ENCODE measurements at regions of chr7 and their contacts with region 1.

Region 1: DNA sequence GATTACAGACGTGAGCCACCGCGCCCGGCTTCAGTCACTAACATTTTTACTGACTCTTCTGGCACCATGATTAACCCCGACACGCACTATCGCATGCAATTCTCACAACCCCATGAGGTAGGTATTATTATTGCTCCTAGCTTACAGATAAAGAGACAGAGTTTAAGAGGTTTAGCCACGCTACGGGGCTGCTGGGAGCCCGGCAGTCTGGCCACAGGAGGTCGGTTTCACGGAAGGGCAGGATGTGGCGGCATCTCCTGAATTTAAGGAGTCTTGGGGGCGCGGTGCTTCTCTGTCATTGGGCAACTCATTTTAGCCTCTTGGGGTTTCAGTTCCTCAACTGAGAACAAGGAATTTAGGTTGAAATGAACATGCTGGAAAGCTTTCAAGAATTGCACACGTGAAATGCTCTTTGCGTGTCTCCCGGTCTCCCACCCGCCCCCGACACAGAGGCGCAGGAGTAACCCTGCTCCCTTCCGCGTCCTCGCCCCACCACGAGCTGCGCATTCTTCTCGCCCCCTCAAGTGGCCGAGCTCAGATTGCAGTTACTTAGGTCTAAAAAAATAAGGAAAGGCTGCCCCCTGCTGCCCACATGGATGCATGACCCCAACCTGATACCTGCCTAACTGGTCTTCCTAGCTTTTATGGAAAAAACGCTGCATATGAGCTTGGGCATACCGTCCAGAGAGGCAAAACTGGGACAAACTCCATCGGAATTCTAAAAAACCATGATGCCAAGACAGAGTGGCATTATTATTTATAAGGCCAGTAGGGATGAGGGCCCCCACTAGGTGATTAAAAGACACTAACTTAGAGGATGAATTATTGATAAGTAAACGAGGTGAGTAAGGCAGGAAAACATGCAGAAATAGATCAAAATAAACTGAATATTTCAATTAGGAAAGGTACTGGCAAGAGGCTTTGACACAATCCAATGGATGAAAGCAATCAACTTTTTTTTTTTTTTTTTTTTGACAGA is 12.4 kb downstream of the PRSS2 start:
- DNase-seq: peak; percentile 88
- ATAC-seq: peak; percentile 49
- H3K4me3 Mint-ChIP-seq: peak overlapping the region; percentile 63
- H3K27ac Mint-ChIP-seq: peak overlapping the region; percentile 89
- H3K4me1 Mint-ChIP-seq: peaks cover 41% of the 10 kb centered on the region
- H3K27me3 Mint-ChIP-seq: no peaks in the 10 kb centered on the region

Region 2: DNA sequence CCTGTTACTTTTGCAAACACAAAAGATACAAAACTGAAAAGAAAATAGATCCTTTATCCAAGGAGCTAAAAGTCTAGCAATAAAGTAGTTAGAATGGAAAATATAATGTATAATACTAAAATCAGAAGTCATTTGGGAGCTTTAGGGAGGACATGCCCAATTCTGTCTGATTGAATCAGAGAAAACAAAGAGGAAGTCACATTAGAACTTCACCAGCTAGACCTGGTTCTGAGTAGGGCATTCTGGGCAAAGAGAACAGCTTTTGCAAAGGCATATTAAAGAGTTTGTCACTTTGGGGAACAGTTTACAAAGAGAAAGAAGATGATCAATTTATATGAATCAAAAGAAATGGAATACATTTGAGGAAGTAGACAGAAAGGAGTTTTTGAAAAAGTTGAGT is 140.9 kb before region 1 on chr7:
- CTCF ChIA-PET with region 1: interaction called, 45 read pairs
- POLR2A ChIA-PET with region 1: interaction called, 6 read pairs
- DNase-seq: no peak
- ATAC-seq: no peak
- H3K4me3 Mint-ChIP-seq: no peak overlapping the region
- H3K27ac Mint-ChIP-seq: no peak overlapping the region
- H3K4me1 Mint-ChIP-seq: peaks cover 22% of the 10 kb centered on the region
- H3K27me3 Mint-ChIP-seq: peaks cover 15% of the 10 kb centered on the region

Region 3: DNA sequence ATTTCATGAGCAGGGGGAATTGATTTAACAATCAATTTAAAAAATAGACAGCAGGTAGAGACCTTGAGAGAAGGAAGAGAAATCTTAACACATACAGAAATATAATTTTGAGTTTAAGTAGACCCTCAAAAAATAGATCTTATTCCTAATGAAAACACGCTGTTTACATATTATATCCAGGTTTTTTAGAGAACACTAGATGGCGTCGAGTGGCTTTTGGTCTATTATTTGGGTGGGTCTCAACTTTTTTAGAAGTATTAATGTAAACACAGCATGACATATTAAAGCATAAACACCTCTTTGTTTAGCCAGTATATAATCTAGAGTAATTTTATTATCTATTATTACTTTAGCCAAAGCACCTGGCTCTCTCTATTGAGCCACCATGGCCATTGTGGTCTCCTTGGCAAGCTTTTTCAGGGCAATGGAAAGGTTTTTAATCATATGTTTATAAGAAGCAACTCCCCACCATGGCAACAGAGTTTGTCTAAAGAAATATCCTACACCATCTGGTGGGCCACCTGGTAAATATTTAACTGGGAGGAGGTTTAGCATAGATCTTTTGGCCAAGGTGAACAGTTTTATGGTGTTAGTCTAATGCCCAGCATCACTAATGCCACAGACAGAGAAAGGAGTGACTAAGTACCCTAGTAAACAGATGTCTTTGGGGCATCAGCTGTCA is 93.6 kb before region 1 on chr7:
- CTCF ChIA-PET with region 1: interaction called, 17 read pairs
- POLR2A ChIA-PET with region 1: no interaction called
- DNase-seq: no peak
- ATAC-seq: peak; percentile 10
- H3K4me3 Mint-ChIP-seq: no peak overlapping the region
- H3K27ac Mint-ChIP-seq: no peak overlapping the region
- H3K4me1 Mint-ChIP-seq: peaks cover 44% of the 10 kb centered on the region
- H3K27me3 Mint-ChIP-seq: no peaks in the 10 kb centered on the region

Region 4: GRCh38 chr7:142717453-142717852 is 65.8 kb before region 1 on chr7:
- CTCF ChIA-PET with region 1: interaction called, 51 read pairs
- POLR2A ChIA-PET with region 1: interaction called, 20 read pairs
- DNase-seq: peak; percentile 60
- ATAC-seq: peak; percentile 70
- H3K4me3 Mint-ChIP-seq: peak overlapping the region; percentile 15
- H3K27ac Mint-ChIP-seq: peak overlapping the region; percentile 73
- H3K4me1 Mint-ChIP-seq: peaks cover 82% of the 10 kb centered on the region
- H3K27me3 Mint-ChIP-seq: peaks cover 2% of the 10 kb centered on the region

Region 5: DNA sequence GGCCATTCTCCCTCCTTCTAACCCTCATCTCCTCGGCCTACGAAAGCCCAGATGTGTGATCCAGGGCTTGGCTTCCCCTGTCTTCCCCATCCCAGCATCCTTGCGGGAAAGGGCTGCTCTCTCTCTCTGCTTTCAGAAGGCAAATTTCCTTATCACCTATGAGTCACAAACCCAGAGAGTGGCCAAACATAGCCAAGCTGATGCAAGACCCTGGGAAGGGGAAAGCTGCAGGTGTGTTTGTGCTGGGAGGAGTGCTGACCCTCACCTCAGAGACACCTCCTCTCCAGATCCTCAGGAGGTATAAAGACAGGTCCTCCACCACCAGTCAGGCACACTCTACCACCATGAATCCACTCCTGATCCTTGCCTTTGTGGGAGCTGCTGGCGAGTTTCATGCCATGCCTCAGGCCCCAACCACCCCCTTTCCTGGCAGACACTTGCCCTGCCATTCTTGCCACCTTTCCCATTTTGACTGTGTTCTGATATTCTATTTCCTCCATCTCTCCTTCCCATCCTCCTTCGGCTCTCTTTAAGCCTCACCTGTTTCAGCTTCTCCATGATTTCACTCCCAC is 23.1 kb before region 1 on chr7:
- CTCF ChIA-PET with region 1: no interaction called
- POLR2A ChIA-PET with region 1: no interaction called
- DNase-seq: no peak
- ATAC-seq: no peak
- H3K4me3 Mint-ChIP-seq: no peak overlapping the region
- H3K27ac Mint-ChIP-seq: no peak overlapping the region
- H3K4me1 Mint-ChIP-seq: no peaks in the 10 kb centered on the region
- H3K27me3 Mint-ChIP-seq: peaks cover 3% of the 10 kb centered on the region

Region 6: DNA sequence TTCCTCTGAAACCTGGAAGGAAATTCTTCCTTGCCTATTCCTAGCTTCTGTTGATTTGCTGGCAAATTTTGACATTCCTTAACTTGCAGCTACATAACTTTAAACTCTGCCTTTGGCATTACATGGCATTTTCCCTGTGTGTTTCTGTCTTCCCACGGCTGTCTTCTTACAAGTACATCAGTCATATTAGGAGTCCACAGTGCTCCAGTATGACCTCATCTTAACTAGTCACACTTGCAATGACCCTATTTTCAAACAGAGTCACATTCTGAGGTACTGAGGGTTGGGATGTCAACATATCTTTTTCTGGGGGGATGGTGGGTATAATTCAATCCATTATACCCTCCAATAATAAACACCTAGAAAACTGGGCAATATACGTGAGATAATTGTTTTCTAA is 34.3 kb after region 1 on chr7:
- CTCF ChIA-PET with region 1: interaction called, 584 read pairs
- POLR2A ChIA-PET with region 1: interaction called, 2,065 read pairs
- DNase-seq: no peak
- ATAC-seq: no peak
- H3K4me3 Mint-ChIP-seq: no peak overlapping the region
- H3K27ac Mint-ChIP-seq: no peak overlapping the region
- H3K4me1 Mint-ChIP-seq: peaks cover 22% of the 10 kb centered on the region
- H3K27me3 Mint-ChIP-seq: peaks cover 18% of the 10 kb centered on the region